Mammary epithelial cell (primary cell): ENCODE measurements at regions of chr2 and their contacts with region 1.

Region 1: GRCh38 chr2:227376911-227377396 is 2.2 kb downstream of the TM4SF20 start:
- DNase-seq: no peak
- H3K4me3 ChIP-seq: no peak overlapping the region
- H3K27ac ChIP-seq: no peak overlapping the region
- H3K4me1 ChIP-seq: no peaks in the 10 kb centered on the region
- H3K27me3 ChIP-seq: no peaks in the 10 kb centered on the region
- CTCF ChIP-seq: no peak

Region 2: GRCh38 chr2:227324995-227325838 is 51.7 kb before region 1 on chr2 and contains the start of gene MFF:
- CTCF ChIA-PET with region 1: no interaction called
- dilution Hi-C with region 1: no loop called
- in situ Hi-C with region 1: no loop called
- intact Hi-C with region 1: loop called (anchors 5 kb)
- DNase-seq: peak; percentile 91
- H3K4me3 ChIP-seq: peak within 1 kb of the TSS; percentile 69 to 89 (median 77)
- H3K27ac ChIP-seq: peak within 1 kb of the TSS; percentile 78
- H3K4me1 ChIP-seq: peaks cover 12% of the 10 kb centered on the region
- H3K27me3 ChIP-seq: no peaks in the 10 kb centered on the region
- CTCF ChIP-seq: peak; percentile 11 to 53
- total RNA-seq, gene MFF: 44.2 to 56.0 TPM

Region 3: DNA sequence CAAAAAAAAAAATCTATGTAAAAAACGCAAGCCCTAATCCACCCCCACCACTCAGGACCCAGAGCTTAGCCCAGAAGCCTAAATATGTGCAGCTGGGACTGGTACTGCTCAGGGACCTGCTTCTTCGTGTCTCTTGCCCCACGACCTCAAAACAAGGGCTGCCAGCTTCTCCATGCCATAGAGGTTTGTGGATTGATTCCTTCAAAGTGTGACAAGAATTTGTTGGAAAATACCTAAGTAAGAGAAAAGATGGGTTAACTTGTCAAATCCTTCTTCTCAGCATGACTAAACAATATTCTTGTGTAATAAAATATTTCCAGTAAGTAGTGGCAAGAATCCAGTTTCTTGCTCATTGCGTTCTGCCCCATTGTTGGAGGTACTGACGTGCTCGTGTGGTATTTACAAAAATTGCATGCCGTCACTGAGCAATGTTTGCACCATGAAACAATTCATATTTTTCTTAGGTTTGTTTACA is 11.6 kb after region 1 on chr2:
- CTCF ChIA-PET with region 1: no interaction called
- dilution Hi-C with region 1: no loop called
- in situ Hi-C with region 1: no loop called
- intact Hi-C with region 1: loop called (anchors 1 kb)
- DNase-seq: peak; percentile 98
- H3K4me3 ChIP-seq: no peak overlapping the region
- H3K27ac ChIP-seq: peak overlapping the region; percentile 84
- H3K4me1 ChIP-seq: peaks cover 4% of the 10 kb centered on the region
- H3K27me3 ChIP-seq: no peaks in the 10 kb centered on the region
- CTCF ChIP-seq: no peak